ENCODE measurements at regions of chr9 and their contacts with region 1.

Region 1: DNA sequence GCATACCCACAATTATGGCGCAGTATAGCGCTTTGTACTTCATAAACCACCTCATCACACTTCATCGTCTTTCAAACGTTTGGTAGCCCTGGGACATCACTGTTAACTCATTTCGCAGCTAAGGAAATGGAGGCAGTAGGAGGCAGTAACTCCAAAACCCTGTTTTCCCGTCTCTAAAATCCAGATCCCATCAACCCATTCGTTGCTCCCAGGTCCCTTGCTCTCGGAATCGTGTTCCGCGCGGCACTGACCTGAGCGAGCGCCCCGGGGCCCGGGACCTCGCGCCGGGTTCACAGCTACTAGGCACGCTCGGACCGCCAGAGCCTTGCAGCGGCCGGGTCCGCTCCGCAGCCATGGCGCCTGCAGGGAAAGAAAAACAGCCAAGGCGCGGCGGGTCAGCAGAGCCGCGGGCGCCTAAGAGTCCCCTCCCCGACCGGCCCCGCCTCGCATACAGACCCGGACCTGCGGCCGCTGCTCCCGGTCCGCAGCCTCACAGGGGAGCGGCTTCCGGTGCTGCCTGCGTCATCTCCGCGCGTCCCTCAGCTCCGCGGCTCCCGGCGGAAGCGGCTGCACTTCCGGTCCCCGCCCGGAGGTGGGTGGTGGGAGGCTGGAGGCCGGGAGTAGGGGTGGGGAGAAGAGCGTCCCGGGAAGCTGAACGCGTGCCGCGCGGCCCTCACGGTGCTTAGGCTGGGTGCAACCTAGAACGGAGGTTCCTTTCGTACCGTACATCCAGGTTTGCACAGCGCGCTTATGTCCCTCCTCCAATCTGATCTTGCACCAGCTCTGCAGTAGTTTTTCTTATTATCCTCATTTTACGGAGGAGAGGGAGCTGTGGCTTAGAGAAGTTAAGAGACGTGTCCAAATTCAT is at the start of gene FBXW2:
- DNase-seq: peak; percentile 78 to 91
- H3K4me3 ChIP-seq: peak within 1 kb of the TSS; percentile 87 to 99 (median 97)
- H3K27ac ChIP-seq: peak within 1 kb of the TSS; percentile 79
- H3K4me1 ChIP-seq: no peaks in the 10 kb centered on the region; a peak in 1 of 7 replicates
- H3K27me3 ChIP-seq: no peaks in the 10 kb centered on the region
- CTCF ChIP-seq: peak in 1 of 3 experiments; percentile 6; a peak in 1 of 4 replicates
- EP300 ChIP-seq: no peak
- POLR2A ChIP-seq: peak; percentile 94 to 95
- RAD21 ChIP-seq: no peak
- total RNA-seq, gene FBXW2: 60.2 and 65.3 TPM in 2 replicates

Region 2: DNA sequence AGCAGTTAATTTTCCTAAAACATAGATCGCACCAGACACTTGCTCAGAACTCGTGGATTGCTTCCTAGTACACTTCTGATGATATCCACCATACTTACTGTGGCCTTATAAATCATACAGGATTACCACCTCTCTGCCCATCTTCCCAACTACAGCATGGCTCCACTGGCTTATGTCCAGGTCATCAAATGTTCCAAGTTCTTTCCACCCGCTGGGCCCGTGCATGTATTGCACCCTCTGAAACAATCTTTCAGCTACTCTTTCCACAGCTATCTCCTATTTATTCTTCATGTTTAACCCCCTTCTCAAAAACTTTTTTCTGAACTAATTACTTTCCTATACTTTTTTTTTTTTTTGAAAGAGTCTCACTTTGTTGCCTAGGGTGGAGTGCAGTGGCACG is 18.4 kb before region 1 on chr9:
- CTCF ChIA-PET with region 1: interaction called, 4 read pairs
- POLR2A ChIA-PET with region 1: interaction called, 19 read pairs
- DNase-seq: no peak
- H3K4me3 ChIP-seq: no peak overlapping the region
- H3K27ac ChIP-seq: no peak overlapping the region
- H3K4me1 ChIP-seq: no peaks in the 10 kb centered on the region
- H3K27me3 ChIP-seq: no peaks in the 10 kb centered on the region
- CTCF ChIP-seq: no peak
- EP300 ChIP-seq: no peak
- POLR2A ChIP-seq: no peak
- RAD21 ChIP-seq: no peak

Region 3: GRCh38 chr9:120820095-120820494 is 27.0 kb after region 1 on chr9:
- CTCF ChIA-PET with region 1: no interaction called
- POLR2A ChIA-PET with region 1: interaction called, 11 read pairs
- DNase-seq: no peak
- H3K4me3 ChIP-seq: no peak overlapping the region
- H3K27ac ChIP-seq: no peak overlapping the region
- H3K4me1 ChIP-seq: no peaks in the 10 kb centered on the region
- H3K27me3 ChIP-seq: no peaks in the 10 kb centered on the region
- CTCF ChIP-seq: no peak
- EP300 ChIP-seq: no peak
- POLR2A ChIP-seq: no peak
- RAD21 ChIP-seq: no peak

Region 4: GRCh38 chr9:120842690-120843499 is 49.8 kb after region 1 on chr9 and contains the start of gene PSMD5:
- CTCF ChIA-PET with region 1: no interaction called
- POLR2A ChIA-PET with region 1: interaction called, 14 read pairs
- DNase-seq: peak; percentile 85 to 96
- H3K4me3 ChIP-seq: peak within 1 kb of the TSS; percentile 91 to 97 (median 94)
- H3K27ac ChIP-seq: peak within 1 kb of the TSS; percentile 87
- H3K4me1 ChIP-seq: peaks cover 0 to 12% (median 6%) of the 10 kb centered on the region in 4 experiments; a peak in 4 of 7 replicates
- H3K27me3 ChIP-seq: no peaks in the 10 kb centered on the region
- CTCF ChIP-seq: no peak; a peak in 1 of 4 replicates
- EP300 ChIP-seq: no peak
- POLR2A ChIP-seq: peak; percentile 87 to 95
- RAD21 ChIP-seq: peak in 1 of 2 experiments; percentile 22; a peak in 1 of 4 replicates
- total RNA-seq, gene PSMD5: 30.0 and 30.5 TPM in 2 replicates